ENCODE measurements at regions of chr7 and their contacts with region 1.

Region 1: GRCh38 chr7:15839416-15840100 is 153.1 kb upstream of the MEOX2 start:
- DNase-seq: peak; percentile 69 to 84 (median 81)
- ATAC-seq: peak; percentile 94 to 98 (median 96)
- H3K4me3 ChIP-seq: peak overlapping the region in 11 of 12 donors; percentile 4 to 54 (median 42)
- H3K27ac ChIP-seq: peak overlapping the region; percentile 18 to 89 (median 79)
- H3K4me1 ChIP-seq: peaks cover 0 to 37% (median 17%) of the 10 kb centered on the region in 12 donors
- H3K27me3 ChIP-seq: no peaks in the 10 kb centered on the region
- CTCF ChIP-seq: no peak
- POLR2A ChIP-seq: no peak

Region 2: DNA sequence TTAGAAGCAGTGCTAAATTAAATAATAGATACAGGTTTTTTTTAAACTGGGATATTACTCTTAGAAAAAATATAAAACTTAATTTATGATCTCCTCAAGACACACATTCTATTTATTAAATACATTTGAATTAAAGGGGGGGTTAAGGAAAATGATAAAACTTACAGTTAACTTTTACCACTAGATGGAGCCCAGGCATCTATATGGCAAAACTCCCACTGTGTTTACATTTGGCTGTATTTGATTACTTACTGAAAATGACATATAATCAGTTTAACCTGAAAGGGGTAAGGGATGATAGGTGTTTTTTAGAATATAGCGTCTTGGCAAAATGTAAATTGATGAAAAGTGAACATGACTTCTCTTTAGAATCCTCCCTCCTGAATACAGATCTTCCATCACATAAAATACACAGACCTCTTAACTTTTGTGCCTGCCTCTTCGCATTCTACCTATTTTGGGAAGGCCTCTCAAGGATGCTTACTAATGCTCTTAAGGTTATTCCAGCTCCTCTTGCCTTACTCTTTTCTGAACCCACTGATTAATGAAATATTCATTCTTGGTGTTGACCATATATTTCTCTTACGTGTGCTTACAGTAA is 513.4 kb before region 1 on chr7:
- intact Hi-C with region 1: no loop called
- DNase-seq: no peak
- ATAC-seq: no peak
- H3K4me3 ChIP-seq: no peak overlapping the region
- H3K27ac ChIP-seq: no peak overlapping the region
- H3K4me1 ChIP-seq: peaks cover 0 to 4% (median 0%) of the 10 kb centered on the region in 12 donors
- H3K27me3 ChIP-seq: no peaks in the 10 kb centered on the region
- CTCF ChIP-seq: peak; percentile 35 to 76 (median 62)
- POLR2A ChIP-seq: no peak

Region 3: GRCh38 chr7:15764851-15765382 is 74.6 kb before region 1 on chr7:
- intact Hi-C with region 1: loop called in 1 of 10 experiments (anchors 5 kb)
- DNase-seq: peak in 3 of 5 donors; percentile 36 to 64 (median 60)
- ATAC-seq: peak; percentile 51 to 85 (median 67)
- H3K4me3 ChIP-seq: no peak overlapping the region
- H3K27ac ChIP-seq: peak overlapping the region in 11 of 12 donors; percentile 6 to 82 (median 55)
- H3K4me1 ChIP-seq: peaks cover 0 to 22% (median 4%) of the 10 kb centered on the region in 12 donors
- H3K27me3 ChIP-seq: no peaks in the 10 kb centered on the region
- CTCF ChIP-seq: no peak
- POLR2A ChIP-seq: no peak

Region 4: GRCh38 chr7:15801551-15801950 is 38.0 kb before region 1 on chr7:
- intact Hi-C with region 1: loop called in 2 of 10 experiments (anchors 5 kb)
- DNase-seq: peak in 2 of 5 donors; percentile 29 to 31
- ATAC-seq: peak; percentile 79 to 92 (median 85)
- H3K4me3 ChIP-seq: no peak overlapping the region
- H3K27ac ChIP-seq: peak overlapping the region; percentile 11 to 70 (median 42)
- H3K4me1 ChIP-seq: peaks cover 0 to 26% (median 6%) of the 10 kb centered on the region in 12 donors
- H3K27me3 ChIP-seq: no peaks in the 10 kb centered on the region
- CTCF ChIP-seq: no peak
- POLR2A ChIP-seq: no peak

Measured in heart left ventricle (tissue), 16 donors.